ENCODE measurements at regions of chr5 and their contacts with region 1.

Region 1: DNA sequence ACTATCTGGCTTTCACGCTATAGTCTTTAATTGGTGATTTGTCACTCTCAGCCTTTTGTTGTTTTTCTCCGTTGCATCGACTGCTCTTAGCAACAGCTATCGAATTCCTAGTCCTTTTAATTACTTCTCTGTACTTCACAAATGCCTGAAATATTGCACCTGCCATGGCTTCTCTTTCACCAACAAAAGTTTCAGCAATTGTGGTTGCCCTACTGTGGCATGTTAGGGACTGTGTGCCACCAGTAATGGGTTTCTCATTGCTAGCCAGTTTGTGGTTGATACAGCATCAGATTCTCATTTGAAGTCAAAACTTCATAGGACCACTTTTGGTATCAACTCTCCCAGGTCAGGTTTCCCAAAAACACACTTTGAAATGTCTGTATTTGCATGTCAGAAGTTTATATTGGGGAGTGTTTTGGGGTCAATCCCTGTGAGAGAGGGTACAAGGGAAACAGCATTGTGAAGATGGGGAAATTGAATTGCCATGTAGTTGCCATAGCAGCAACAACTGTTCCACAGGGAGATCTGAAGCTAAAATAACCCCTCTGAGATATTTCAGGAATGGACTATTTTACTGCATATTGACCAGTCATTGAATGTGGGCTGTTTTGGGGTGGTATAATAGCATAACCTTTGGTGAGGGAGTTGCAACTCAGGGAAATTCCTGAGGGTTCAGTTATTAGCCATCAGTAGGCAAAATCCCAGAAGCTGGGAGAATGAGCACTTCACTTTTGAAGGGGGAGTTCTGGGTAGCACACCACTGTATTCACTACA is 99.2 kb downstream of the WDR70 start:
- DNase-seq: no peak
- H3K27ac ChIP-seq: no peak overlapping the region
- CTCF ChIP-seq: no peak

Region 2: DNA sequence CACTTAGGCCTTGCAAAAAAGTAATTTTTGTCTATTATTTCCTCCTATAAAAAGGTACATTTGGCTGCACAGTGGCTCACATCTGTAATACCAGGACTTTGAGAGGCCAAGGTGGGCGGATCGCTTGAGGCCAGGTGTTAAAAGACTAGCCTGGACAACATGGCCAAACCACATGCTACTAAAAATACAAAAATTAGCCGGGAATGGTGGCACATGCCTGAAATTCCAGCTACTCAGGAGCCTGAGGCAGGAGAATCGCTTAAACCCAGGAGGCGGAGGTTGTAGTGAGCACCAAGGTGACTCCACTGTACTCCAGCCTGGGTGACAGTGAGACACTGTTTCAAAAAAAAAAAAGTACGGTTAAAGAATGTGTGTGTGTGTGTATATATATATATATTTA is 123.1 kb before region 1 on chr5:
- CTCF ChIA-PET with region 1: no interaction called
- POLR2A ChIA-PET with region 1: interaction called, 14 read pairs
- DNase-seq: no peak
- H3K27ac ChIP-seq: no peak overlapping the region
- CTCF ChIP-seq: no peak

Region 3: DNA sequence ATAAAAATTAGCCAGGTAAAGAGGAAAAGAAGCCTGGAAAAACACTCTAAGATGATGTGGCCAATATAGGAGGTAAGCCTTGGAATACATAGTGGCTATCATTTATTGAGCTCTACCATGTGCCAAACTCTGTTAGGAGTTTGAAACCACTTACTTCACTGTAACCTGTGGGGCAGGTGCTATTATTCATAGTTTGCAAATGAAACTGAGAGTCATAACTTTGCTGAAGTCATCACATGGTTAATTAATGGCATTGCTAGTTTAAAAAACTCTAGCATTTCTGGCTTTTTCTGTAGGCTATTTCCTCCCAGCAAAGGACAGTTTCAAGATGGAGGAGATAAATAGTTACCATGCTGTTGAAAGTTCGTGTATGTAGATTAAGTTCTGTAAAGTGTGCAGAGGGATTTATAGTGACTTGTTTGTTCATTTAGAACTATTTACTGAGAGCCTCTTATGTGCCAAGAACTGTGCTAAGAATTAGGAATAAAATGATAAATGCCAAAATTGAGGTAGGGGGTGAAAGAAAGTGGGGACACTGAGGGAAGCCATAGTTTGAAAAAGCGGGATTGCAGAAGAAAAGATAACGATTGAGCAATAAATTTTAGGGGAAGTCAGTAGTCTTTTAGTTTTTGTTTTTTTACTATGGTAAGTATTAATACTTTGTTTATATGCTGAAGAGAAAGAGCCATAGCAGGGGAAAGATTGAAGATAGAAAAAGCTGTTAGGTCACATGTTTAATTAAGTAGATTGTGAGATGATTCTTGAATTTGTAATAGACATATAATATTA is 42.0 kb before region 1 on chr5:
- CTCF ChIA-PET with region 1: no interaction called
- POLR2A ChIA-PET with region 1: no interaction called
- DNase-seq: no peak
- H3K27ac ChIP-seq: no peak overlapping the region
- CTCF ChIP-seq: no peak

Region 4: GRCh38 chr5:37645707-37646106 is 167.4 kb after region 1 on chr5:
- CTCF ChIA-PET with region 1: no interaction called
- POLR2A ChIA-PET with region 1: no interaction called
- DNase-seq: no peak
- H3K27ac ChIP-seq: no peak overlapping the region
- CTCF ChIP-seq: no peak

Measured in RWPE1 (cell line).